Caco-2 (cell line): ENCODE measurements at regions of chr1 and their contacts with region 1.

Region 1: GRCh38 chr1:150995896-150996295 is 10.8 kb downstream of the MINDY1 start:
- DNase-seq: peak in 1 of 2 experiments; percentile 55
- H3K4me3 ChIP-seq: no peak overlapping the region
- H3K4me3 Mint-ChIP-seq: no peak overlapping the region
- H3K27ac Mint-ChIP-seq: peak overlapping the region; percentile 26
- H3K4me1 ChIP-seq: peaks cover 15% of the 10 kb centered on the region; the same call in 1 of the 2 replicates
- H3K4me1 Mint-ChIP-seq: peaks cover 11% of the 10 kb centered on the region
- H3K27me3 ChIP-seq: no peaks in the 10 kb centered on the region
- H3K27me3 Mint-ChIP-seq: no peaks in the 10 kb centered on the region
- CTCF ChIP-seq: peak; percentile 66 to 95

Region 2: DNA sequence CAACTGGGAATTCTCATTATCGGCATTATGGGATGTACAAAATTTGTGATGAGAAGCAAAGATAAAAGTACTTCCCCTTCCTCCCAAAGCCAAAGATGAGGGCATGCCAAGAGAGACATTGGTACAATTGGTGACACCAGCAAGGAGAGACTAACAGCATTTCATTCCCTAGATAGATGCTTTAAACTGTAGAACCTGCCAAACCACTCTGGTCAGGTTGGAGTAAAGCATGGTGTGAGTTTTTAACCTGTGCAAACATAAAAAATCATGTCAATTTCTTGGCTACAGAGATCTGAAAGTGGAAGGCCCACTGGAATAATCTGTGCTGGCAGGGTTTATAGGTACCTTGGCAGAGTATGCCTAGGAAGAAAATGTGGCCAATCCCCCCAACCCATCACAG is 89.6 kb before region 1 on chr1:
- CTCF ChIA-PET with region 1: interaction called, 10 read pairs
- POLR2A ChIA-PET with region 1: no interaction called
- intact Hi-C with region 1: no loop called
- DNase-seq: peak in 1 of 2 experiments; percentile 24
- H3K4me3 ChIP-seq: no peak overlapping the region
- H3K4me3 Mint-ChIP-seq: no peak overlapping the region
- H3K27ac Mint-ChIP-seq: no peak overlapping the region
- H3K4me1 ChIP-seq: no peaks in the 10 kb centered on the region
- H3K4me1 Mint-ChIP-seq: peaks cover 8% of the 10 kb centered on the region
- H3K27me3 ChIP-seq: no peaks in the 10 kb centered on the region
- H3K27me3 Mint-ChIP-seq: no peaks in the 10 kb centered on the region
- CTCF ChIP-seq: no peak

Region 3: DNA sequence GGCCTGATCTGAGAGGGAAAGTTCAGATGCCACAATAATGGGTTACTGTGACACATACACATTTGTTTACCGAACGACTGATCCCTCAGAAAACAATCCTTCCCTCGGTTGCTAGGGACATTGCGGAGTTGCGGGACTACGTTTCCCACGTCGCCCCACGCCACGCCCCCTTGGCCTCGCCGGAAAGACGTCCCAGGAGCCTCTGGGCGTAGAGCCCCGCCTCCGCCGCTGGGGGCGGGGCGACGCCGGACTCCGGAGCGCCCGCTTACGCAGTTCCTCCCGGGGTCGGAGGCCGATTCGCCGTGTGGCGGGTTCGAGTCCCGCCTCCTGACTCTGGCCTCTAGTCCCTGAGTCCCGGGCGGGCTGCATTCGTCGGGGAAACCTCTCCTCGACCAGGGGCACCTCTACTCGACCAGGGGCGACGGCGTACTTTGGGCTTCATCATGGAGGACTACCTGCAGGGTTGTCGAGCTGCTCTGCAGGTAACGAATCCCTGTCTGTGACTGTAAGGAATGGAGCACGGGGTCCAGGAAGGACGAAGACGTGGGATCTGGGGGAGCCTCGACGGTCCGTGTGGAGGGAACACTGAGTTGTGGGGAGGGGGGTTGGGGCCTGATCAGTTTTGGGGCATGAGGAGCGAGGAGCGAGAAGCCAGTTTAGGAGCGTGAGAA is 12.4 kb after region 1 on chr1 and contains the start of gene PRUNE1:
- CTCF ChIA-PET with region 1: interaction called, 50 read pairs
- POLR2A ChIA-PET with region 1: interaction called, 5 read pairs
- intact Hi-C with region 1: no loop called
- DNase-seq: peak; percentile 96 to 97
- H3K4me3 ChIP-seq: peak within 1 kb of the TSS; percentile 71
- H3K4me3 Mint-ChIP-seq: peak within 1 kb of the TSS; percentile 92
- H3K27ac Mint-ChIP-seq: peak within 1 kb of the TSS; percentile 99
- H3K4me1 ChIP-seq: peaks cover 46% of the 10 kb centered on the region
- H3K4me1 Mint-ChIP-seq: peaks cover 21% of the 10 kb centered on the region
- H3K27me3 ChIP-seq: no peaks in the 10 kb centered on the region
- H3K27me3 Mint-ChIP-seq: no peaks in the 10 kb centered on the region
- CTCF ChIP-seq: no peak
- total RNA-seq, gene PRUNE1: 24.2 and 24.3 TPM in 2 replicates

Region 4: GRCh38 chr1:151070474-151071276 is 74.8 kb after region 1 on chr1 and contains the start of gene GABPB2:
- CTCF ChIA-PET with region 1: no interaction called
- POLR2A ChIA-PET with region 1: no interaction called
- intact Hi-C with region 1: no loop called
- DNase-seq: peak; percentile 87 to 90
- H3K4me3 ChIP-seq: peak within 1 kb of the TSS; percentile 64
- H3K4me3 Mint-ChIP-seq: peak within 1 kb of the TSS; percentile 98
- H3K27ac Mint-ChIP-seq: peak within 1 kb of the TSS; percentile 100
- H3K4me1 ChIP-seq: peaks cover 10% of the 10 kb centered on the region; the same call in 1 of the 2 replicates
- H3K4me1 Mint-ChIP-seq: no peaks in the 10 kb centered on the region
- H3K27me3 ChIP-seq: no peaks in the 10 kb centered on the region
- H3K27me3 Mint-ChIP-seq: no peaks in the 10 kb centered on the region
- CTCF ChIP-seq: peak; percentile 74 to 95
- total RNA-seq, gene GABPB2: 2.0 and 2.6 TPM in 2 replicates

Region 5: GRCh38 chr1:151146412-151147140 is 150.7 kb after region 1 on chr1 and contains the start of gene SEMA6C:
- CTCF ChIA-PET with region 1: no interaction called
- POLR2A ChIA-PET with region 1: no interaction called
- intact Hi-C with region 1: no loop called
- DNase-seq: peak; percentile 93 to 95
- H3K4me3 ChIP-seq: peak within 1 kb of the TSS; percentile 80
- H3K4me3 Mint-ChIP-seq: peak within 1 kb of the TSS; percentile 86
- H3K27ac Mint-ChIP-seq: peak within 1 kb of the TSS; percentile 10
- H3K4me1 ChIP-seq: peaks cover 16% of the 10 kb centered on the region
- H3K4me1 Mint-ChIP-seq: peaks cover 12% of the 10 kb centered on the region
- H3K27me3 ChIP-seq: no peaks in the 10 kb centered on the region
- H3K27me3 Mint-ChIP-seq: no peaks in the 10 kb centered on the region
- CTCF ChIP-seq: no peak
- total RNA-seq, gene SEMA6C: 2.8 and 3.7 TPM in 2 replicates

Region 6: DNA sequence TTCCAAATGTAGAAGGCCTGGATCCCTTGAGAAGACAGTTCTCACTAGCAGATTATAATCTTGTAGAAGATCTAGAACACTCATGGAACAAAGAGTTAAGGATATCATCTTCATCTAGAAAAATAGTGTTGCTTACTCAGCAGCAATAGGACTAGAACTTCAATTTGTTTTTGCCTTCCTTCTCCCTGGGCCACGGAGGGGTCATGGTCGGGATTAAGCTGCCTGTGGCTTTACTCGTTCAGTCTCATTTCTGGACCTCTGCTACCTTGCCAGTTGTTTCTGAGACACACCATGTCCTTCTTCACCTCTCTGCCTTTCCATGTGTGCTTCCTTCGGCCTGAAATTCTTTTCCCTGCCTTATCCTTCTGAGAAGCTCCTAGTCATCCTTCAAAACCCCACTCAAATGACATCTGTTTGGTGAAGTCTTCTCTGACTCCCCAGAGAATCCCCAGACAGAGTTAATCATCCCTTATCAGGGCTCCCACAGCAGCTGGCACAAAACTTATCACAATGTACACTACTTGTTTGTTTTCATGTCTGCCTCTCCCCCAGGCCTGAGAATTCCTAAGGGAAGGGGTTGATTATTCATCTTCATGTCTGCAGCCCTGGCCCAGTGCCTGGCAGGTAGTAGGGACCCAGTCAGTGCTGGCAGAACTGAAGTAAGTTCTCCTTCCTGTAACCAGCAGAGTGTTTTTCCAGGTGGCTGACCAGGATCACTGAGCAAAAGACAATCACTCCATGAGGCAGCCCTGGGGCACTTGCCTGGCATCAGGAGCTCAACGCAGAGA is 600.5 kb after region 1 on chr1:
- CTCF ChIA-PET with region 1: no interaction called
- POLR2A ChIA-PET with region 1: no interaction called
- intact Hi-C with region 1: no loop called
- DNase-seq: peak; percentile 60 to 68
- H3K4me3 ChIP-seq: no peak overlapping the region
- H3K4me3 Mint-ChIP-seq: no peak overlapping the region
- H3K27ac Mint-ChIP-seq: peak overlapping the region; percentile 6
- H3K4me1 ChIP-seq: peaks cover 18% of the 10 kb centered on the region
- H3K4me1 Mint-ChIP-seq: peaks cover 23% of the 10 kb centered on the region
- H3K27me3 ChIP-seq: no peaks in the 10 kb centered on the region
- H3K27me3 Mint-ChIP-seq: no peaks in the 10 kb centered on the region
- CTCF ChIP-seq: no peak